Activated CD4-positive, alpha-beta memory T cell treated with anti-CD3 and anti-CD28 coated beads for 36 hours (primary cell): ENCODE measurements at regions of chr12 and their contacts with region 1.

Region 1: DNA sequence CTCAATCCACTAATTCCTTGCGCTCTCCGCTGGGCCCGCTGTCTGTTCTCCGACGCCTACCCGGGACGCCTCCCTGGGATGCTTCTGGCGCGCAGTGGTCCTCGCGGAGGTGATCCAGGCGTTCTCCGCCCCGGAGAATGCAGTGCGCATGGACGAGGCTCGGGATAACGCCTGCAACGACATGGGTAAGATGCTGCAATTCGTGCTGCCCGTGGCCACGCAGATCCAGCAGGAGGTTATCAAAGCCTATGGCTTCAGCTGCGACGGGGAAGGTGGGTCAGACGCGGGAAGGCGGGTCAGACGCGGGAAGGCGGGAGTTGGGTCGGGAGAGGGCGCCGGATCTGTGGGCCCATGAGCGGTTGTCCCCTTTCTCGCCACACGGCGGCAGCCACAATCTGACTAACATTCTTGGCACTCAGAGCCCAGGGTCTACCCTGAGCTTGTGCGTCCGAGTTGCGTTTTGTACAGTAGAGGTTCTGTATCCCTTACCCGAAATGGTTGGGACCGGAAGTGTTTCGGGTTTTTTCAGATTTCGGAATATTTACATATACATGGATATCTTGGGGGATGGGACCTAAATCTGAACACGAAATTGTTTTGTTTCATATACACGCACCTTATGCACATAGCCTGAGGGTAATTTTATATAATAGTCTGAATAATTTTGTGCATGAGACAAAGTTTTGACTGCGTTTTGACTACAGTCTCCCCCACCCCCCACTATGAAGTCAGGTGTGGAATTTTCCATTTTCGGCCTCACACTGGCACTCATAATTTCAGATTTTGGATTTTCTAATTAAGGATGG is 762 bp downstream of the C12orf57 start:
- DNase-seq: peak; percentile 95
- H3K4me3 Mint-ChIP-seq: peak overlapping the region; percentile 90
- H3K27ac Mint-ChIP-seq: peak overlapping the region; percentile 100
- H3K4me1 Mint-ChIP-seq: peaks cover 56% of the 10 kb centered on the region
- H3K27me3 Mint-ChIP-seq: peaks cover 6% of the 10 kb centered on the region

Region 2: DNA sequence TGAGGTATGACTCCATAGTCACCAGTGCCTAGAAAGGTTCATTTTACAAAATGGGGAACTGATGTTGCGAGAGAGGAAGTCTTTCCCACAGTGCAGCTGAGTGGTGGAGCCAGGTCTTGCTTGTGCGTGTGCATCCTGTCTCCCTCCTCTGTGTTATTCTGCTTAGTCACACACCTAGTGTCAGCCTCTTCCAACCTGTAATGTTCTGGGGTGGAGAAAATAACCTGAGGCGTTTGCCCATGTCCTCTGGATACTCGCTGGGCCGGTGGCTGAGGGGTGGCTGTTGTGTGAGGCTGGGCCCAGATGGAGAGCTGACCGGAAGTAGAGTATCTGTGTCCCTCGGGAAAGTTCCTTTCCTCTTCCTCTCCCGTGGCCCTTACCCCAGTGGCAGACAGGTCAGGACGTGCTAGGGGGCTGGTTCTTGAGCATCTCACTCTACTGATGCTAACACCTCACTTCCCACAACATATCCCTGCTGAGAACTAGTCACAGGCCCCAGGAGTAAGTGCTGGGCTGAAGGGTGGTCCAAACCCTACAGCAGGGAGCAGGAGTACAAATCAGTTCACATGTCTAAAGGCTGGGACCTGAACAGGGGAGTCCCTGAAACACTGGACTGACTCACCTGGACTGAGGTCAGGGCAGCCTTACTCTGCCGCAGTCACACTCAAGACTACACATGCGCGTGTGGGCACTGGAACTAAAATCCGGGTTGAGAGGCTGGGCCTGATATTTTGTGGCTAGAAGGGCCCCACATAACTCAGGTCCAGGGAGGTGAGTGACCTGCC is 198.7 kb before region 1 on chr12:
- CTCF ChIA-PET with region 1: no interaction called
- POLR2A ChIA-PET with region 1: no interaction called
- intact Hi-C with region 1: no loop called
- DNase-seq: peak; percentile 43
- H3K4me3 Mint-ChIP-seq: no peak overlapping the region
- H3K27ac Mint-ChIP-seq: peak overlapping the region; percentile 82
- H3K4me1 Mint-ChIP-seq: peaks cover 41% of the 10 kb centered on the region
- H3K27me3 Mint-ChIP-seq: no peaks in the 10 kb centered on the region

Region 3: GRCh38 chr12:6818222-6818621 is 126.4 kb before region 1 on chr12:
- CTCF ChIA-PET with region 1: no interaction called
- POLR2A ChIA-PET with region 1: no interaction called
- intact Hi-C with region 1: no loop called
- DNase-seq: no peak
- H3K4me3 Mint-ChIP-seq: no peak overlapping the region
- H3K27ac Mint-ChIP-seq: no peak overlapping the region
- H3K4me1 Mint-ChIP-seq: peaks cover 11% of the 10 kb centered on the region
- H3K27me3 Mint-ChIP-seq: no peaks in the 10 kb centered on the region

Region 4: DNA sequence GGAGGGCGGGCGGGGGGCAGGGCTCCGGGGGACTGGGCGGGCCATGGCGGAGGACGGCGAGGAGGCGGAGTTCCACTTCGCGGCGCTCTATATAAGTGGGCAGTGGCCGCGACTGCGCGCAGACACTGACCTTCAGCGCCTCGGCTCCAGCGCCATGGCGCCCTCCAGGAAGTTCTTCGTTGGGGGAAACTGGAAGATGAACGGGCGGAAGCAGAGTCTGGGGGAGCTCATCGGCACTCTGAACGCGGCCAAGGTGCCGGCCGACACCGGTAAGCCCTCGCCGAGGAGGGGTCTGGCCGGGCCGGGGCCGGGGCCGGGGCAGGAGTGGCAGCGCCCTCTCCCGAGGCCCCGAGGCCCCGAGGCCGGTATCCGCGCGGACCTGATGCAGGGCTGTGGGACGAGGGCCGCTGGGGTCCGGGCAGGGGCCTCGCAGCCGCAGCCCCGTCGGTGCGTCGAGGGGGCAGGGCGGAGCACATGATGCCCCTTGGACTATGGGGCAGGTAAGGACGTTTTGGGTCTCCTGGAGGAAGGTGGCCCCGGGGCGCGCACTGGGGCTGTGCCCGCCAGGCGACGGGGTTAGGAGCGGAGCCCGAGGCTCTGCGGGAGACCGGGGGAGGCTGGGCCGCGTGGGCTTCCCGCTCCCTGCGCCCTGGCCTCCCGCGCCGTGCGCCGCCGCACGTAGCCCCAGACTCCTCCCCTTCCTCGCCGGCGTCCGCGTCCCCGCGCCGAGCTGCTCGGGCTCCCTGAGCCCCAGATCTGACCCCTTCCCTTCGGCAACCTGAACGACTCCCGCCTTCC is 77.0 kb before region 1 on chr12 and contains the start of gene TPI1:
- CTCF ChIA-PET with region 1: interaction called, 18 read pairs
- POLR2A ChIA-PET with region 1: interaction called, 18 read pairs
- intact Hi-C with region 1: no loop called
- DNase-seq: peak; percentile 88
- H3K4me3 Mint-ChIP-seq: peak within 1 kb of the TSS; percentile 98
- H3K27ac Mint-ChIP-seq: peak within 1 kb of the TSS; percentile 98
- H3K4me1 Mint-ChIP-seq: peaks cover 54% of the 10 kb centered on the region
- H3K27me3 Mint-ChIP-seq: no peaks in the 10 kb centered on the region
- total RNA-seq, gene TPI1: 1,432 to 1,495 TPM

Region 5: GRCh38 chr12:6914246-6914946 is 30.2 kb before region 1 on chr12 and contains the start of gene ENO2:
- CTCF ChIA-PET with region 1: interaction called, 3 read pairs
- POLR2A ChIA-PET with region 1: interaction called, 13 read pairs
- intact Hi-C with region 1: no loop called
- DNase-seq: peak; percentile 88
- H3K4me3 Mint-ChIP-seq: peak within 1 kb of the TSS; percentile 92
- H3K27ac Mint-ChIP-seq: peak within 1 kb of the TSS; percentile 88
- H3K4me1 Mint-ChIP-seq: peaks cover 30% of the 10 kb centered on the region
- H3K27me3 Mint-ChIP-seq: no peaks in the 10 kb centered on the region
- total RNA-seq, gene ENO2: 185 to 193 TPM

Region 6: DNA sequence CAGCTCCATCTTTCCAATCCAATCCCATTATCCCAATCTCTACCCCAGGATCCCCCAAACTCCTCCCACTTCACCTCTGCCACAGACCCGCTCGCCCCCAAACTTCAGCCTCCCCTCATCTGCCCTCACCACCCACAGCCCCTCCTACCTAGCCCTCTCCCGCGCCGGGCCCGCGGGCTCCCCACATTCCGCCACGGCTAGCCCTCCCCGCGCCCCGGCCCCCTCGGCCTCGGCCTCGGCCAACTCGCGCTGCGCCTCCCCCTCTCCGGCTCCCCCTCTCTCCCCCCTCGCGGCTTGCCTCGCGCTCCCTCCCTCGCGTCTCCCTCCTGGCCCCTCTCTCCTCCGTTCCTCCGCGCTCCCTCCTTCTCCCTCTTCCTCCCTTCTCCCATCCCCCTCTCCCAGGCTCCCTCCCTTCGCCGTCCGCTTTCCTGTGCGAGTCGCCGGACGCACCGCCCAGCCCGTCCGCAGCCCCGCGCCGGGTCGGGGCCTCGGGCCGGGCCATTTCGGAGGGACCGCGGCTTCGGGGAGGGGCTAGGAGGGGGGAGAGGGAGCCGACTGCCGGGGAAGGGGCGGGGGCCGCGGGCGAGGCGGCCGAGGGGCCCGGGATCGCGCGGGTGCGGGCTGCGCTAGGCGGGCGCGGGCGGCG is 17.1 kb before region 1 on chr12 and contains the start of gene ATN1:
- CTCF ChIA-PET with region 1: interaction called, 42 read pairs
- POLR2A ChIA-PET with region 1: interaction called, 39 read pairs
- intact Hi-C with region 1: loop called (anchors 1 kb)
- DNase-seq: peak; percentile 61
- H3K4me3 Mint-ChIP-seq: peak within 1 kb of the TSS; percentile 84
- H3K27ac Mint-ChIP-seq: peak within 1 kb of the TSS; percentile 89
- H3K4me1 Mint-ChIP-seq: peaks cover 64% of the 10 kb centered on the region
- H3K27me3 Mint-ChIP-seq: no peaks in the 10 kb centered on the region
- total RNA-seq, gene ATN1: 34.8 to 37.8 TPM

Region 7: GRCh38 chr12:7018350-7019042 is 73.9 kb after region 1 on chr12 and contains the start of gene LPCAT3:
- CTCF ChIA-PET with region 1: interaction called, 13 read pairs
- POLR2A ChIA-PET with region 1: interaction called, 17 read pairs
- intact Hi-C with region 1: loop called (anchors 1 kb)
- DNase-seq: peak; percentile 98
- H3K4me3 Mint-ChIP-seq: peak within 1 kb of the TSS; percentile 88
- H3K27ac Mint-ChIP-seq: peak within 1 kb of the TSS; percentile 73
- H3K4me1 Mint-ChIP-seq: peaks cover 26% of the 10 kb centered on the region
- H3K27me3 Mint-ChIP-seq: no peaks in the 10 kb centered on the region
- total RNA-seq, gene LPCAT3: 18.3 to 20.5 TPM

Region 8: DNA sequence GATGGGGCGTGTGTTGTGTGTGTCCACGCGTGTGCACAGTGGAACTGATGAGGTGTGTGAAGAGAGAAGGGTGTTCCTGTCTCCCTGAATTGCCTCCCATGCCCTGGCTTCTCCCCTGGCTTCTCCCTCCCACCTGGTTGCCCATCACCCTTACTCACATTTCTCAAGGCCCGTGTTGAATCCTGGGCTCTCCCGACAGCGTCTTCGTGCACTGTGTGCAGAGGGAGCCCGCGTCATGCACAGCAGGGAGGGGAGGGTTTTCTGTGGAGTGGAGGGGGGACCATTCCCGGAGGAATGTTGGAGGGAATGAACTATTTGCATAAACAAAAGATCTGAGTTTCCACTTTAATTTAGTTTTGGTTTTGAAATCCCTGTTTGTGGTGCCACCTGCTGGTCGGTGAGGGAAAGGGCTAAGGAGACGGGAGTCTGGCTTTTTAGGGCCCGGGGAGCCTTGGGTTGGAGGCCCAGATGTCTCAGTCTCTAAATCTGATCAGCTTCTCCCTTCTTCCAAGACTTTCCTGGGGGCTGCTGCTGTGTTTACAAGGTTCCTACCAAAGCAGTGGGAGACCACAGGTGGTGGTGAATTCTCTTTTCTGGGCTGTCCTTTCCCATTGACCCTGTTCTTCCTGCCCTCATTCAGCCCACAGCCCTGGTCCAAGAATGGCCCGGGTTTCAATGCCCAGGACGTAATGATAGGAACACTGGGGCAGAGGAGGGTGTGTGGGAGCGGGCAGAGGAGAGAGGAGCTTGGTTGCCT is 147.8 kb after region 1 on chr12 and contains the start of gene C1R:
- CTCF ChIA-PET with region 1: interaction called, 5 read pairs
- POLR2A ChIA-PET with region 1: interaction called, 4 read pairs
- intact Hi-C with region 1: loop called (anchors 1 kb)
- DNase-seq: peak; percentile 79
- H3K4me3 Mint-ChIP-seq: peak within 1 kb of the TSS; percentile 76
- H3K27ac Mint-ChIP-seq: no peak within 1 kb of the TSS
- H3K4me1 Mint-ChIP-seq: peaks cover 7% of the 10 kb centered on the region
- H3K27me3 Mint-ChIP-seq: no peaks in the 10 kb centered on the region
- total RNA-seq, gene C1R: 1.4 to 2.2 TPM

Region 9: DNA sequence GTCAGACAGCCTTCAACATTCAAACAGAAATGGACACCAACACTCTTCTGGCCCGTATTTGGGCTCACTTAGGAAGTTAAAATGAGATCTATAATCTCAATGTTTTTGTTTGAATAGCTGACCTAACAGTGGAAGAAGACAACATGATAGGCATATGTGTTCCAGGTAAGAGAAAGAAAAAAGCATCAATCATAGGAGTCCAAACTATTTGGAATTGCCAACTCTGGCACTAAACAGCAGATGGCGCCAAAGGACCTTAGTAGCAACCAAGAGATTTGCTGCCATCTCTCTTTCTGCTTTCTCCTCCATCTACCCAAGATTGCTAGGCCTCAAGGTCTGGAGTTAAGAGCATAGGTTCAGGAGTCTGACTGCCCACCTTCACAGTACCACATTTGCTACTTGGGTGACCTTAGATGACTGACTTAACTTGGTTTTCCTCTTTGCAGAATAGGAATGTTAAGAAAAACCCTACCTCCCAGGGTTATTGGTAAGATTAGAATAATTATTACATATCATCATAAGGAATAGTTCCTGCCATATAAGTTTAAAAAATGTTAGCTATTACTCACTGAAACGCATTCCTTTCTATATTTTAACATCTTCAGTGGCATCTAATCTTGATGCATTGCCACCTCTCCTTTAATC is 275.1 kb after region 1 on chr12:
- CTCF ChIA-PET with region 1: no interaction called
- POLR2A ChIA-PET with region 1: no interaction called
- intact Hi-C with region 1: no loop called
- DNase-seq: peak; percentile 77
- H3K4me3 Mint-ChIP-seq: no peak overlapping the region
- H3K27ac Mint-ChIP-seq: no peak overlapping the region
- H3K4me1 Mint-ChIP-seq: no peaks in the 10 kb centered on the region
- H3K27me3 Mint-ChIP-seq: no peaks in the 10 kb centered on the region